Ascending aorta (tissue), 2 donors: ENCODE measurements at regions of chr10 and their contacts with region 1.

Region 1: DNA sequence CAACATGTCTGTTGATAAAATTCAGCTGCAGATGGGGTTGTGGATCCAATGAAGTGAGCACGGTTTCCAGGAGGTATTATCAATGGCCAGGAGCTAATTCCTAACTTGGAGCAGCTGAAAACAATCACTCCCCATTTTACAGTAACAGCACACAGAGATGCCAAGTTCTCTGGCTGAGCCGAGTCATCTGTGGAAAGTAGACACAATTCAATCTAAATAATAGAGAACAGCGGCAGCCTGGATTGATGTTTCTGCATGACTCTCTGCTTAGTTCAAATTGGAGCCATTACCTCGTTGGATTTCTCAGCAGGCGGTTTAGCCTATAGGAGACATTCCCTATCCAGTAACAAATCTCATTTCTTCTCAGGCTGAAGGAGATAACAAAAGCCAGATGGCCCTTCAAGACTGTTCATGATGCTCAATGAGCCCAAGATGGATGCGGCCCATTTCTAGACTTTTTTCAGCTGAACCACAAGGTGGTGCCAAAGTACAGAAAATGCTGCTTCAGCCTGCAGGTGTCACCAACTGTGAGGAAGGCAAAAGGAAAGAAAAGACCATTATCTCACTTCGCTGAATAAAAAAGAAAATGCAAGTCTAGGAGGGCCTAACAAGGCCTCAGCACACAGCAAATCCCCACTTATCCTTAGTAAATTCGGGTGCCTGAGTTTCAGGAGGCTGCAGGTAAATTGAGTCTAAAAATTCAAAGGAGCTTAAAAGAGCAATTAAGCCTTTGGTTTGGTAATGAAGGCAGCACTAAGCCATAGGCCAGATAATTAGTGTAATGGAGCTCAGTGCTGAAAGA is 83.7 kb downstream of the SLC16A9 start:
- DNase-seq: no peak
- H3K4me3 ChIP-seq: no peak overlapping the region
- H3K27ac ChIP-seq: no peak overlapping the region
- H3K4me1 ChIP-seq: peaks cover 0 to 3% of the 10 kb centered on the region in 2 donors
- H3K27me3 ChIP-seq: no peaks in the 10 kb centered on the region
- CTCF ChIP-seq: peak; percentile 68 to 88 (median 84)

Region 2: GRCh38 chr10:58781873-58782488 is 843.9 kb before region 1 on chr10:
- intact Hi-C with region 1: loop called (anchors 5 kb)
- DNase-seq: no peak
- H3K4me3 ChIP-seq: no peak overlapping the region
- H3K27ac ChIP-seq: no peak overlapping the region
- H3K4me1 ChIP-seq: peaks cover 0 to 4% of the 10 kb centered on the region in 2 donors
- H3K27me3 ChIP-seq: no peaks in the 10 kb centered on the region
- CTCF ChIP-seq: peak; percentile 34 to 70 (median 58)

Region 3: DNA sequence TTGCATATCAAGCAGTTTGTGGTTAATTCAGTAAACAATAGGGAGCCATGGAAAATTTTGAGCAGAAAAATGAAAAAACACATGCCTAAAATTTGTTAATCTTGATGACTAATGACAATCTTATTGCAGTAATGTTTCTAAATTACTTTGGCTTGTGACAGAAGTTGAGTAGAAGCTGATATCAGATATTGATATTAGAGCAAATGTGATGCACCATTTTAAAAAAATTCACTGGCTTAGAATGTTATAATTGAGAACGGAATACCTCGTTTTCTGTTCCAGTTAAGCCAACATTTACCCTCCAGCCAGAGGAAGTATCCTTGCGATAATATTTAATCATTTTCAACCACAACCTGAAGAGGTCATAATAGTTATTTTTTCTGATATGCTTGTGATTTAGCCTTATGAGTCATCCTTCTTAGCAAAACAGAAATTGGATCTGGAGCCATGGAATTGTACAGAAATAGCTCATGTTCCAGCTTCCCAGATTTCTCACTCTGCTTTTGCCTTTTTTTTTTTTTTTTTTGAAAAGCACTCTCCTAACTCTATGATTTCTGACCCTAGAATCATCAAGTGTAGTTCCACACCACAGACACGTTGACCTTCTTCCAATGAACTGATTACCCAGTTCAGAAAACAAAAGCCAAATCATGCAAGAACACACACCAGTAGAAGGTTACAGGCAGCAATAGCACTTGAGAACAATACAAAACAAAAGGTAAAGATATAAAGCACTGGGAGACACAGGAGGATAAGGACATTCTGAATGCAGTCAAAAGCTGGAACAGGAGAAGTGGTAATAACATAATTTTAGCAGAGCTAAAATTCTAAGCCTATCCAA is 546.3 kb before region 1 on chr10:
- intact Hi-C with region 1: loop called (anchors 5 kb)
- DNase-seq: no peak
- H3K4me3 ChIP-seq: no peak overlapping the region
- H3K27ac ChIP-seq: peak overlapping the region; percentile 82 to 86
- H3K4me1 ChIP-seq: peaks cover 8 to 48% of the 10 kb centered on the region in 2 donors
- H3K27me3 ChIP-seq: no peaks in the 10 kb centered on the region
- CTCF ChIP-seq: no peak

Region 4: GRCh38 chr10:59265141-59265540 is 360.8 kb before region 1 on chr10:
- intact Hi-C with region 1: no loop called
- DNase-seq: no peak
- H3K4me3 ChIP-seq: no peak overlapping the region
- H3K27ac ChIP-seq: no peak overlapping the region
- H3K4me1 ChIP-seq: no peaks in the 10 kb centered on the region
- H3K27me3 ChIP-seq: no peaks in the 10 kb centered on the region
- CTCF ChIP-seq: no peak

Region 5: DNA sequence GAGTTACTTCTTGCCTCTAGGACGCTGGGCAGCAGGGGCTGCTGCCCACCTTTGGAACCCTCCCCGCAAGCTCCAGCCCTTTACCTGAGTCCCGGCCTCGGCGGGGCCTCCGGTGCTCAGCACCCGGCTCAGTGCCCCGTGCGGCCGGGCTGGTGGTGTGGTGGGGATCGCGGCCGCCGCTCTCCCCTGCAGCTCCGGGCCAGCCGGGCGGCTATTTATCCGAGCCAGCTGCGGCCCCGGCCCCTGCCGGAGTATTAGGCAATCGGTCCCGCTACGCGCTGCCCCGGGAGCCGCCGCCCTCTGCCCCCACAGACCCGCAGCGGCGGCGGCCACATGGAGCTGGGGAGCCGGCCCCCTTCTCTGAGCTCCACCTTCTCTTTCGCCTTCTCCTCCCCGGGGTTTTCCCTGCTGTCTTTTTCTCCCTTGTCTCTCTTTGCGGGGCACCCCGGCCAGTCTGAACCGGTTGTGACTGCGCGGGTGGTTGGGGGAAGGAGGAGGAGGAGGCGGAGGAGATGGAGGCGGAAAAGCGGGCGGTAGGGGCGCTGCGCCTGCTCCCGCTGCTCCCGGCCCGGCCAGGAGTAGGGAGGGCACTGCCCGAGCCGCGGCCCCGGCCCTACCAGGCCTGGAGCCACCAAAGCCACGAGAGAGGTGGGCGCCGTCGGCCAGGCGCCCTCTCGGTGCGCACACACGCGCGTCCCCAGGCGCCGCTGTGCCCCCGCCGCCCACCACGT is 83.6 kb after region 1 on chr10 and contains the start of gene SLC16A9:
- intact Hi-C with region 1: loop called (anchors 5 kb)
- DNase-seq: peak in 1 of 2 donors; percentile 75
- H3K4me3 ChIP-seq: peak within 1 kb of the TSS; percentile 75 to 84
- H3K27ac ChIP-seq: peak within 1 kb of the TSS; percentile 83 to 85
- H3K4me1 ChIP-seq: peaks cover 4 to 17% of the 10 kb centered on the region in 2 donors
- H3K27me3 ChIP-seq: no peaks in the 10 kb centered on the region
- CTCF ChIP-seq: peak in 2 of 3 experiments; percentile 40 to 50
- total RNA-seq, gene SLC16A9: 2.9 TPM

Region 6: GRCh38 chr10:59830601-59831259 is 204.8 kb after region 1 on chr10:
- intact Hi-C with region 1: loop called (anchors 2 kb)
- DNase-seq: no peak
- H3K4me3 ChIP-seq: no peak overlapping the region
- H3K27ac ChIP-seq: no peak overlapping the region
- H3K4me1 ChIP-seq: peaks cover 5 to 8% of the 10 kb centered on the region in 2 donors
- H3K27me3 ChIP-seq: no peaks in the 10 kb centered on the region
- CTCF ChIP-seq: peak in 2 of 3 experiments; percentile 70 to 81

Region 7: GRCh38 chr10:60032723-60033122 is 406.8 kb after region 1 on chr10:
- intact Hi-C with region 1: loop called (anchors 2 kb)
- DNase-seq: peak in 1 of 2 donors; percentile 75
- H3K4me3 ChIP-seq: no peak overlapping the region
- H3K27ac ChIP-seq: no peak overlapping the region
- H3K4me1 ChIP-seq: no peaks in the 10 kb centered on the region
- H3K27me3 ChIP-seq: no peaks in the 10 kb centered on the region
- CTCF ChIP-seq: peak; percentile 41 to 55 (median 51)

Region 8: DNA sequence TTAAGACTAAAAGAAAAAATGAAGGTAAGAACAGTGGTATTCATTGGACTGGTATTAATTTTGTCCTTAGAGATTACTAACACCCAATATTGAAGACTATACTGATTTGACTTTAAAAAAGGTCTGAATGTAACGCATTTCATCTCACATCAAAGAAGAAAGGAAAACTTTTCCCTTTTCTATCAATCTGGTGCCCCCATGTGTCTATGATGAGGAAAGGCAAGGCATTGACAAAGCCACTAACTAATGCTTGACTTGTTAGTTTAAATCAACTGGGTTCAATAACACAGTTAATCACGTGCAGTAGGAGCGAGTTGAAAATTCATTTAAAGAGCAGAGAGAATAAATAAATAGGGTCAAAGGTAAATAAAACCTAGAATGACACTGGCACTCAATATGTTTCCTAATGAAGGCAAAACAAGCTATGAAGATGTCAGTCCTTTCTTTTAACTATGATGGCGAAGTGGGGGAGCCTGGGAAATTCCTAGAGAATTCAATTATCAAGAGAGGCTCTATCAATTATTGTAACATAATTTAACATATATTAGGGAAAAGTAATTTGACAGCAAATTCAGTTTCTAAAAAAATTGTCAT is 582.9 kb after region 1 on chr10:
- intact Hi-C with region 1: loop called (anchors 5 kb)
- DNase-seq: no peak
- H3K4me3 ChIP-seq: no peak overlapping the region
- H3K27ac ChIP-seq: no peak overlapping the region
- H3K4me1 ChIP-seq: peaks cover 0 to 11% of the 10 kb centered on the region in 2 donors
- H3K27me3 ChIP-seq: no peaks in the 10 kb centered on the region
- CTCF ChIP-seq: peak; percentile 61 to 84 (median 77)